Cardiac septum (tissue), 1 donor: ENCODE measurements at regions of chr11 and their contacts with region 1.

Region 1: GRCh38 chr11:122202951-122203456 is 87.0 kb upstream of the BLID start:
- DNase-seq: no peak

Region 2: DNA sequence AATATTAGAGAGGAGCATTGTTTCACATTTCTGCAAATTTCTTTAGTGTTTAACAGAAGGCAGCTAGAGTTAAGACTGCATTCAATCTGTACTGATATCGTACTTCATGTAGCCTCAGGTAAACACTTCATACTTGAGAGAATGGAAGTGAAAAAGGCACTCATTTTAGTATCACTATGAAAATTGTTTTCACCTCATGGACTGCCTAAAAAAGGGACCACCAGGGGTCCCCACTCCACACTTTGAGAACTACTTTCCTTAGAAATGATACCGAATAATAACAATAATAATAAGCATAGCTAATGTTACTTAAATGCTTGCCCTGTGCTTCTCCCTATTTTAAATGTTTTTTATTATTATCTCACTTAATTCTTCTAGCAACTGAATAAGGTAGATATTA is 182.1 kb before region 1 on chr11:
- intact Hi-C with region 1: loop called (anchors 5 kb)
- DNase-seq: no peak

Region 3: GRCh38 chr11:122059565-122059964 is 143.4 kb before region 1 on chr11:
- intact Hi-C with region 1: no loop called
- DNase-seq: no peak